A549 (cell line): ENCODE measurements at regions of chr1 and their contacts with region 1.

Region 1: GRCh38 chr1:156104065-156104810 is 10.3 kb upstream of the LMNA start:
- DNase-seq: peak; percentile 85 to 87
- ATAC-seq: peak; percentile 46 to 66; a peak in 5 of 6 replicates
- H3K4me3 ChIP-seq: no peak overlapping the region
- H3K27ac ChIP-seq: peak overlapping the region; percentile 92 to 96
- H3K4me1 ChIP-seq: peaks cover 92% of the 10 kb centered on the region
- CTCF ChIP-seq: no peak
- EP300 ChIP-seq: no peak
- POLR2A ChIP-seq: no peak
- RAD21 ChIP-seq: no peak

Region 2: GRCh38 chr1:156090822-156091188 is 13.4 kb before region 1 on chr1:
- CTCF ChIA-PET with region 1: interaction called, 69 read pairs
- POLR2A ChIA-PET with region 1: interaction called, 4 read pairs
- DNase-seq: peak; percentile 85
- ATAC-seq: peak; percentile 95 to 96
- H3K4me3 ChIP-seq: no peak overlapping the region
- H3K27ac ChIP-seq: peak overlapping the region; percentile 38 to 84; a peak in 5 of 6 replicates
- H3K4me1 ChIP-seq: peaks cover 24% of the 10 kb centered on the region
- CTCF ChIP-seq: peak; percentile 93
- EP300 ChIP-seq: no peak
- POLR2A ChIP-seq: no peak
- RAD21 ChIP-seq: peak; percentile 97

Region 3: DNA sequence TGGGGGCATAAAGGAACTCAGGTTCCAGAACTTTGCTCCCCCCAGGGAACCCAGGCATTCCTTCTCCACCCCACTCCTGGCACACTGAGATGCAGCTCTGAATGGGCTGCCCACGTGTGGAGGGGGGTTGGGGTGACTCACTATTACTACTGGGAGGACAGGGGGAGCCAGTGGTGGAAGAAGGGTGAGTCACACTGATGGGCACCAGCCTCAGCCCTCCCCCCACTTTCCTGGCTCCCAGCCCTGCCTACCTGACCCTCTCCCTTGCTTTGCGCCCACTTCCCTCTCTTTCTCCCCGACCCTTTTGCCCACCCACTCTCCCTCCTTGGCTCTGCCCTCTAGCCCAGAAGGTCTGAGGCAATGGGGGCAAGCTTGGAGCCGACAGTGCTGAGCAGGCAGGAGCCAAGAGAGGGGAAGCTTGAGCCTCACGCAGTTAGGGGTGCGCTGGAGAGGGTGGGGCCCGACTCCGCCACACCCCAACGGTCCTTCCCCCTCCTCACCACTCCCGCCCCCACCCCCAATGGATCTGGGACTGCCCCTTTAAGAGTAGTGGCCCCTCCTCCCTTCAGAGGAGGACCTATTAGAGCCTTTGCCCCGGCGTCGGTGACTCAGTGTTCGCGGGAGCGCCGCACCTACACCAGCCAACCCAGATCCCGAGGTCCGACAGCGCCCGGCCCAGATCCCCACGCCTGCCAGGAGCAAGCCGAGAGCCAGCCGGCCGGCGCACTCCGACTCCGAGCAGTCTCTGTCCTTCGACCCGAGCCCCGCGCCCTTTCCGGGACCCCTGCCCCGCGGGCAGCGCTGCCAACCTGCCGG is 10.1 kb after region 1 on chr1 and contains the start of gene LMNA:
- CTCF ChIA-PET with region 1: interaction called, 2,239 read pairs
- POLR2A ChIA-PET with region 1: interaction called, 32 read pairs
- DNase-seq: peak; percentile 96 to 98
- ATAC-seq: peak; percentile 83 to 84
- H3K4me3 ChIP-seq: peak within 1 kb of the TSS; percentile 99
- H3K27ac ChIP-seq: peak within 1 kb of the TSS; percentile 95 to 98
- H3K4me1 ChIP-seq: peaks cover 51% of the 10 kb centered on the region
- CTCF ChIP-seq: no peak
- EP300 ChIP-seq: peak; percentile 7 to 43; a peak in 1 of 5 replicates
- POLR2A ChIP-seq: peak; percentile 97
- RAD21 ChIP-seq: 0 out of 5 replicates have a peak, but pooled peaks of 1 of the 2 experiments have one; percentile 6
- polyA plus RNA-seq, gene LMNA: 155 and 214 TPM in 2 replicates

Region 4: GRCh38 chr1:156123356-156124196 is 19.3 kb after region 1 on chr1:
- CTCF ChIA-PET with region 1: interaction called, 2,239 read pairs
- POLR2A ChIA-PET with region 1: interaction called, 49 read pairs
- DNase-seq: peak in 1 of 2 experiments; percentile 95
- ATAC-seq: peak; percentile 49 to 53
- H3K4me3 ChIP-seq: peak overlapping the region; percentile 28
- H3K27ac ChIP-seq: peak overlapping the region; percentile 95 to 98
- H3K4me1 ChIP-seq: peaks cover 96% of the 10 kb centered on the region
- CTCF ChIP-seq: peak; percentile 49
- EP300 ChIP-seq: peak in 1 of 2 experiments; percentile 36; a peak in 2 of 5 replicates
- POLR2A ChIP-seq: 0 out of 2 replicates have a peak, but pooled peaks have one; percentile 12
- RAD21 ChIP-seq: peak in 1 of 2 experiments; percentile 24; a peak in 1 of 5 replicates